A549 (cell line): ENCODE measurements at regions of chr7 and their contacts with region 1.

Region 1: DNA sequence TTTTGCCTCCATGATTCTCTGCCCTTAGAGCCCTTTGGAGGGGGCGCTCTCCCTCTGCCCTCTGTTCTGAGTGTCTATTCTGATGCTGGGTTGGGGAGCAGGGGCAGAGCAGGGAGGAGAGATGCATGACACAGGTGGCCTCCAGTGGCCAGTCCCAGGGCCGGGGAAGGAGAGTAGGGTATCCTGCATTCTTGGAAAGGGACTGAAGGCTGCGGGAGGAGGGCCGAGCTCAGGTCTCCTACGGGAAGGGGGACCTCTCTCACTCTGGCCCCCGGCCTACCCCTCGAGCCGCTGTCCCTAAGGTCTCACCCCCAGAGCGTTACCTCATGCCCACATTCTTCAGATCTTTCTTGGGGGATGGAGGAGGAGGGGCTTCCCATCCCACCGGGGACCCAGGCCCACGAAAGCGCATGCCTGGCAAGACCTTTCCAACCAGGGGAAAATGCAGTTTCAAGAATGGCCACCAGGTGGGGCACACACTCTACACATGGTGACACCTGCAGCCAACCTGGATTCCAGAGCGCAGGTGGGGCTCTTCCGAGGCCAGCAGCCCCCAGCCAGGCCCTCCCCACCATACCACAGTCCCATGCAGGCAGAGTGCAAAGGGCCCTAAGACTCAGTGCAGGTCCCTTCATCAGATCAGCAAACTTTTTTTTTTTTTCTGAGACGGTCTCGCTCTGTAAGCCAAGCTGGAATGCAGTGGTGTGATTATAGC is 86.4 kb downstream of the MYL10 start:
- DNase-seq: peak; percentile 54 to 67
- ATAC-seq: peak; percentile 57 to 71
- H3K4me3 ChIP-seq: no peak overlapping the region
- H3K27ac ChIP-seq: peak overlapping the region in 1 of 2 experiments; percentile 39; a peak in 1 of 6 replicates
- H3K4me1 ChIP-seq: no peaks in the 10 kb centered on the region
- CTCF ChIP-seq: peak; percentile 91
- EP300 ChIP-seq: no peak
- POLR2A ChIP-seq: no peak
- RAD21 ChIP-seq: peak; percentile 97

Region 2: DNA sequence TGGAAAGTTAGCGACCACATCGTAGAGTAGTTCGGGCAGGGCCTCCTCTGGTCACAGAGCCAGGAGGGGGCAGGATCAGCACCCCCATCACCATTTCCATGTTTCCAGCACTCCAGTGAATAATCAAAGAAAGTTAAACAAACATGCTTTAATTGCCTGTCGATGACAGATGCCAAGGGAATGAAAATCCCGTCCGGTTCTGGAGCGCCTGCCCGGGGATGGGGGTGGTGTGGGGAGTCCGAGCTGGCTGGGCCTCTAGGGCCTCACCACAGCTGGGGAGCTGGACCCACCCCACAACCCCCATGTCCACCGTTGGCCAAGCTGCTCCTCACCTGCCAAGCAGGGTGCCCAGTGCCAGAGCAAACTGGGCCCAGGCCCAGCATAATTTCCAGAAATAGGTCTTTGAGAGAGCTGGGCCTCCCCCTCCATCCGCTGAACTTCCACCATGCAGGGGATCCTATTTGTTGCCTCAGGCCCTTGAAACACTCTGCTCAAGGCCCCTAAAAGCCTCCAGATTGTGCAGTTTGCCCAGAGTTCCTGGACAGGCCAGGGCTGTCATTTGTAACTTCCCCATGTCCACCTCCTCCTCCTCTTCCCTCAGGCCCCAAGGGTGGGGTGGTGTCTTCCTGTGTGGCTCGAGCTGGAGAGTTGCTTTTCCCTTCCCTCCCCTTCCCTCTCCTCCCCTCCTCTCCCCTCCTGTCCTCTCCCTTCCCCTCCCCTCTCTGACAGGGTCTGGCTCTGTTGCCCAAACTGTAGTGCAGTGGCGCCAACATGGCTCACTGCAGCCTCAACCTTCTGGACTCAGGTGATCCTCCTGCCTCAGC is 14.6 kb before region 1 on chr7:
- CTCF ChIA-PET with region 1: interaction called, 12 read pairs
- POLR2A ChIA-PET with region 1: no interaction called
- DNase-seq: no peak
- ATAC-seq: peak in 1 of 2 experiments; percentile 26; a peak in 2 of 6 replicates
- H3K4me3 ChIP-seq: no peak overlapping the region
- H3K27ac ChIP-seq: no peak overlapping the region
- H3K4me1 ChIP-seq: no peaks in the 10 kb centered on the region
- CTCF ChIP-seq: no peak
- EP300 ChIP-seq: no peak
- POLR2A ChIP-seq: no peak
- RAD21 ChIP-seq: no peak

Region 3: GRCh38 chr7:101567230-101567629 is 24.5 kb after region 1 on chr7:
- CTCF ChIA-PET with region 1: interaction called, 11 read pairs
- POLR2A ChIA-PET with region 1: no interaction called
- DNase-seq: no peak
- ATAC-seq: no peak
- H3K4me3 ChIP-seq: no peak overlapping the region
- H3K27ac ChIP-seq: no peak overlapping the region
- H3K4me1 ChIP-seq: no peaks in the 10 kb centered on the region
- CTCF ChIP-seq: no peak
- EP300 ChIP-seq: no peak
- POLR2A ChIP-seq: no peak
- RAD21 ChIP-seq: no peak

Region 4: DNA sequence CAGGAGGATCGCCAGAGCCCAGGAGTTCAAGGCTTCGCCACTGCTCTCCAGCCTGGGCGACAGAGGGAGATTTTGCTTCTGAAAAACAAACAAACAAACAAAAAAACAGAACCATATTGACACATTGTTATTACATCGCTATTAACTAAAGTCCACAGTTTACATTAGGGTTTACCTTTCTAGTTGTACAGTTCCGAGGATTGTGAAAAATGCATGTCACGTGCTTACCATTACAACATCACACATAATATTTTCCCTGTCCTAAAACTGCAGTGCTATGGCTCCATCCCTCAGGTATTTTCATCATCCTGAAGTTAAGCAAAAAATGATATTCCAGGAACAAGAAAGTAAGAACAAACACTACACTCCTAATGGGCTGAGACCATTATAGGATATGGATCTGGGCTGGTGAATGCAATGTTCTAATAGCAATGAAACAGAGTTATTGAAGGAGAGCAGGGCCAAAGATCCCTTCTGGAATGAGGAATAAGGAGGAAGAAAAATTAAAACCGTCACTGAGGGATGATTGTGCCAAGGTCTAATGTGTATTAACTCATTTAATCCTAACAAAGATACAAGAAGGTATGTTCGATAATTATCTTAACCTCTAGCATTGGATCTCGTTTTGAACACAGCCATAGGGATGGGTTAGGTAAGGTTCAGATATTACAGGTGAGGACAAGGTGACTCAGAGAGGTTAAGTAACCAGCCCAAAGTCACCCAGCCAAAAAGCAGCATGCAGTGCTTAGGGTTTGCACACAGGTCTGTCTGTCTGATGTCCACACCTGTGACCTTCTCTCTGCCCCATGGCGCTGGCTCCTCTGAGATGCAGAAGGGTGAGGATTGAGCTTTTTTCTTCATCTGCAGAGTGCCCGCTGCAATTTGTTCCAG is 260.8 kb after region 1 on chr7:
- CTCF ChIA-PET with region 1: no interaction called
- POLR2A ChIA-PET with region 1: no interaction called
- DNase-seq: no peak
- ATAC-seq: no peak
- H3K4me3 ChIP-seq: no peak overlapping the region
- H3K27ac ChIP-seq: no peak overlapping the region
- H3K4me1 ChIP-seq: 0 out of 3 replicates have a peak, but pooled peaks cover 4% of the 10 kb centered on the region
- CTCF ChIP-seq: no peak
- EP300 ChIP-seq: no peak
- POLR2A ChIP-seq: no peak
- RAD21 ChIP-seq: no peak

Region 5: GRCh38 chr7:101838837-101839483 is 296.3 kb after region 1 on chr7:
- CTCF ChIA-PET with region 1: no interaction called
- POLR2A ChIA-PET with region 1: no interaction called
- DNase-seq: no peak
- ATAC-seq: peak; percentile 30 to 48; a peak in 5 of 6 replicates
- H3K4me3 ChIP-seq: no peak overlapping the region
- H3K27ac ChIP-seq: no peak overlapping the region
- H3K4me1 ChIP-seq: peaks cover 6% of the 10 kb centered on the region; the same call in 1 of the 3 replicates
- CTCF ChIP-seq: no peak
- EP300 ChIP-seq: no peak
- POLR2A ChIP-seq: no peak
- RAD21 ChIP-seq: no peak

Region 6: DNA sequence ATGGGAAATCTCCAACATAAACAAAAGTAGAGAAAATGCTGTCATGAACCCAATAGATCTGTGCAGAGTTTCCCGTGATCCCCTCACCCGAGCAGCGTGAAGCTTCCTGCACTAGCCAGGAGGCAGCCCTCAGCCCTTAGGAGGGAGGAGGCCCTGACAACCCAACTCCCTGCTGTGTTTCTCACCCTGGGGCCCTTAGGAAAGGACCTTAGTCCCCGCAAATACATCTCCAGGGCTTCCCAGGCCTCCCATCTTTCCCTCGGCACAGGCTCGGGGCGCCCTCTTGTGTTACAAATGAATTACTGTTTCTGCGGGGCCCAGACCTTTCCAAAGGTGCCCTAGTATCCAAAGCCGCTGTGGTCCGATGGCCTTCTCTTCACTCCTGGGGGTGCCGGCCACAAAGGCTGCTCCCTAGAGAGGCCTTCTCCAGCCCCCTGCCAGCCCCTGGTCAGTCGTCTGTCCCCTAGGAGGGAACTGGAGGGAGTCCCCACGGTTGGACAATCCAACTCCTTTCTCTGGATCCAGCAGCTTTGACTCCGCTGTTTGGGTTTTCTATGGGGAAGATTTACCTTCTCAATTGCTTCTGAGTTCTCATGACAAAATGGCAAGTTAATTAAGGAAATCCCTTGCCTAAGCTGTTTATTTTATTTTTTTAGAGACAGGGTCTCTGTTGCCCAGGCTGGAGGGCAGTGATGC is 694.1 kb after region 1 on chr7:
- CTCF ChIA-PET with region 1: interaction called, 13 read pairs
- POLR2A ChIA-PET with region 1: no interaction called
- DNase-seq: peak; percentile 78 to 87
- ATAC-seq: peak; percentile 94 to 97
- H3K4me3 ChIP-seq: no peak overlapping the region
- H3K27ac ChIP-seq: peak overlapping the region; percentile 65 to 78
- H3K4me1 ChIP-seq: peaks cover 6% of the 10 kb centered on the region
- CTCF ChIP-seq: peak; percentile 89
- EP300 ChIP-seq: no peak
- POLR2A ChIP-seq: no peak
- RAD21 ChIP-seq: peak; percentile 98

Region 7: DNA sequence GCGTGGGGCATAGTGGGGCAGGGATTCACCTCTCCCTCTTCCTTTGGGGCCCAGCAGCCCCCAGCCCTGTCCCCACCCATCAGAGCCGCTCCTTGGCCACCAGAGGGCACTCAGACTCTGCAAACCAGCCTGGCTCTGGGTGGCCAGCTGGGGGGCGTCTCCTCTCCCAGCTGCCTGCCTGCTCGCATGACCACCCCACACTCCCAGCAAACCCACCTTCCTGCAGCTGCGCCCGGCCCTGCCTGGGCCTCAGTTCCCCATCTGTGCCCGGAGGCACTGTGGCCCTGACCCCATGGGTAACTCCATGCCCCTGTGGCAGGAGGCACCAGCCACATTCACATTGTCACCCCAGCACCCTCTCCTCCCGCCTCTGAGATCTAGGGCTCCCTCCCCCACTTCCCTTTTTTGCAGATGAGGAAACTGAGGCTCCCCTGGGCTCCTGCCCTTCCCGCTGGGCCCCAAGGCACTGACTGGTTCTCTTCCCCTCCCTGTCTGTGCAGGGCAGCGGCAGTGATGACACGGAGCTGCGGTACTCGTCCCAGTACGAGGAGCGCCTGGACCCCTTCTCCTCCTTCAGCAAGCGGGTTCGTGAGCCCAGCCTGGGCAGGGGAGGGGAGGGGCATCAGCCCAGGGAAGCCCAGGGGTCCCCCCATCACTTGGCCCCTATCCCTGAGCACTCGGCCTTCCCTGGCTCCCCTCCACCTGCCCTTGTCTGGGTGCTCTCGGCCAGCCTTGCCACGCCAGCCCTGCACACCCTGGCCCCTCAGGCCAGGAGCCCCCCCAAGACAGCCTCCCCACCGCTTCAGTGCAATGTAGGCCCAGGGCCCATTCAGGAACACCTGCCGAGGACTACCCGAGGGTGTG is 737.1 kb after region 1 on chr7:
- CTCF ChIA-PET with region 1: interaction called, 12 read pairs
- POLR2A ChIA-PET with region 1: no interaction called
- DNase-seq: peak; percentile 57 to 60
- ATAC-seq: peak; percentile 83 to 96
- H3K4me3 ChIP-seq: no peak overlapping the region
- H3K27ac ChIP-seq: no peak overlapping the region
- H3K4me1 ChIP-seq: 0 out of 3 replicates have a peak, but pooled peaks cover 3% of the 10 kb centered on the region
- CTCF ChIP-seq: peak; percentile 90
- EP300 ChIP-seq: no peak
- POLR2A ChIP-seq: no peak
- RAD21 ChIP-seq: peak; percentile 92 to 96

Region 8: GRCh38 chr7:102450242-102450641 is 907.6 kb after region 1 on chr7:
- CTCF ChIA-PET with region 1: no interaction called
- POLR2A ChIA-PET with region 1: no interaction called
- DNase-seq: no peak
- ATAC-seq: peak; percentile 58 to 77; a peak in 5 of 6 replicates
- H3K4me3 ChIP-seq: no peak overlapping the region
- H3K27ac ChIP-seq: no peak overlapping the region
- H3K4me1 ChIP-seq: no peaks in the 10 kb centered on the region
- CTCF ChIP-seq: peak; percentile 22; the same call in 1 of the 3 replicates
- EP300 ChIP-seq: no peak
- POLR2A ChIP-seq: no peak
- RAD21 ChIP-seq: peak; percentile 33 to 54; a peak in 3 of 5 replicates